Motor neuron (in vitro differentiated cells): ENCODE measurements at regions of chr4 and their contacts with region 1.

Region 1: GRCh38 chr4:73653695-73654106 is 33.5 kb upstream of the RASSF6 start:
- ATAC-seq: peak; percentile 36 to 82 (median 54)
- H3K4me3 ChIP-seq: no peak overlapping the region
- H3K27ac ChIP-seq: no peak overlapping the region
- H3K4me1 ChIP-seq: no peaks in the 10 kb centered on the region

Region 2: GRCh38 chr4:73573794-73574406 is 79.8 kb before region 1 on chr4:
- in situ Hi-C with region 1: loop called in 1 of 9 experiments (anchors 10 kb)
- ATAC-seq: peak; percentile 57 to 97 (median 81)
- H3K4me3 ChIP-seq: no peak overlapping the region
- H3K27ac ChIP-seq: no peak overlapping the region
- H3K4me1 ChIP-seq: no peaks in the 10 kb centered on the region

Region 3: DNA sequence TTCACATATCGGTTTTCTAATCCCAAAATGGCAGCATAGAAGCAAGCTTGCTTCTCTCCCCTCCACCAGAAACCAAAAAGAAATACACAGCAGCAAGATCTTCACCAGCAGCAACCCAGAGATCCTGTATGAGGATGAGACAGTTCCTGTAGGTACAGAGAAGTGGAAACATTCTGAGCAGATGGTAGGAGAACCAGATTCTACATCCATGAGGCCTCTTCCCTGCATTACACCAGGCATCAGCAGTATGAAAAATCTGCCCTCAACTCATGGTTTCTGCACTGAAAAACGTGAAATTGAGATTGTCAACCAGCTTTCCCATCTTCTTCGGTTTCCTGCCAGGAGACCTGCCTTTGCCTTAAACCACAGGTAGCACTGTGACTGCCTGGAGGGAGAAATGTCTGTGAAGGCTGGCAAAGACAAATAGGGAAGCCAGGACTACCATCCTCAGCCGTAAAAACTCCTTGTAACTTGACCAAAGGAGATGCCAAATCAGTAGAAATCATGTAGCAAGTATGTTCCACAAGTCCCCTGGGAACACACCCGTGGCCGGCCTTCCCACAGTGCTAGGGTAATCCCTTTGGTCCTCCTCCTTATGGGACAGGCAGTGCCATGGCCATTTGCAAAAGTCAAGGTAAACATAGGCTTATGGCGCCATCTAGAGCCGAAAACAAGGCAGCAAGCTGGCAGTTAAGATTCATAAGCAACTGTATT is 480.2 kb after region 1 on chr4:
- in situ Hi-C with region 1: loop called in 2 of 9 experiments (anchors 25 kb)
- ATAC-seq: peak; percentile 77 to 97 (median 94)
- H3K4me3 ChIP-seq: no peak overlapping the region
- H3K27ac ChIP-seq: no peak overlapping the region
- H3K4me1 ChIP-seq: no peaks in the 10 kb centered on the region